ENCODE measurements at regions of chr6 and their contacts with region 1.

Region 1: DNA sequence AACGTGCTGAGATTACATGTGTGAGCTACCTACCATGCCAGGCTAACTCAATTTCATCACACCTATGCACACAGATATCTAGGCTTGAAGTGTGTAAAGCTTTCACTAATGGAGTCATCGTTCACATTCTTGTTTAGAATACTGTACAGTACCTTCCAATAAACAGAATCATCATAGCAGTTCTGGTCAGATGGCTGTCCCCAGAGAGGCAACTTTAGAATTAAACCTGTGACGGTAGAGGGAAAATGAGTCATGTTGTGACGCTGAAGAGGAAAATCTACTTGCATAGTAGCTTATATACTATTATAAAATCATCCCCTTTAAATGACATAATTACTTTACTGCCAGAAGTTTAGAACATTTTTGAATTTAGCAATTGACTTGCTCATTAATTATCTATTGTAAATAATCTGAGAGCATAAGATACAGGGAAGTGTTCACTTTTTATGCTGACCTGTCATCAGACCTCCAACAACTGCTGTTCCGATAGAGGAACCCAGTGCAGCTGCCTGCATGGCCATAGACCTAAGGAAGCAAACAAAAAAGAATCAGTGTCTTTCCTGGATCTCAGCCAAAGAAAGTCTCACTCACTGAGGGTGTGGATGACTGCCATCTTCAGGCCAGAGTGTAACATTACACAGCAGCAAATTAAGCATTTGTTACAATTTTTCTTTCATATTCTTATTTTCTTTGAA is 29.8 kb downstream of the RHAG start:
- DNase-seq: peak; percentile 27 to 68
- H3K4me3 ChIP-seq: no peak overlapping the region
- H3K27ac ChIP-seq: no peak overlapping the region
- H3K4me1 ChIP-seq: no peaks in the 10 kb centered on the region
- H3K27me3 ChIP-seq: no peaks in the 10 kb centered on the region
- CTCF ChIP-seq: peak; percentile 93

Region 2: GRCh38 chr6:49462927-49463611 is 143.8 kb before region 1 on chr6 and contains the starts of genes CENPQ and MMUT:
- CTCF ChIA-PET with region 1: no interaction called
- POLR2A ChIA-PET with region 1: no interaction called
- intact Hi-C with region 1: loop called (anchors 5 kb)
- DNase-seq: peak; percentile 87 to 88
- H3K4me3 ChIP-seq: peak within 1 kb of the TSS; percentile 89
- H3K27ac ChIP-seq: peak within 1 kb of the TSS; percentile 58
- H3K4me1 ChIP-seq: peaks cover 18% of the 10 kb centered on the region
- H3K27me3 ChIP-seq: no peaks in the 10 kb centered on the region
- CTCF ChIP-seq: no peak
- total RNA-seq, gene CENPQ: 9.5 and 11.0 TPM in 2 replicates
- total RNA-seq, gene MMUT: 14.4 and 17.5 TPM in 2 replicates

Region 3: DNA sequence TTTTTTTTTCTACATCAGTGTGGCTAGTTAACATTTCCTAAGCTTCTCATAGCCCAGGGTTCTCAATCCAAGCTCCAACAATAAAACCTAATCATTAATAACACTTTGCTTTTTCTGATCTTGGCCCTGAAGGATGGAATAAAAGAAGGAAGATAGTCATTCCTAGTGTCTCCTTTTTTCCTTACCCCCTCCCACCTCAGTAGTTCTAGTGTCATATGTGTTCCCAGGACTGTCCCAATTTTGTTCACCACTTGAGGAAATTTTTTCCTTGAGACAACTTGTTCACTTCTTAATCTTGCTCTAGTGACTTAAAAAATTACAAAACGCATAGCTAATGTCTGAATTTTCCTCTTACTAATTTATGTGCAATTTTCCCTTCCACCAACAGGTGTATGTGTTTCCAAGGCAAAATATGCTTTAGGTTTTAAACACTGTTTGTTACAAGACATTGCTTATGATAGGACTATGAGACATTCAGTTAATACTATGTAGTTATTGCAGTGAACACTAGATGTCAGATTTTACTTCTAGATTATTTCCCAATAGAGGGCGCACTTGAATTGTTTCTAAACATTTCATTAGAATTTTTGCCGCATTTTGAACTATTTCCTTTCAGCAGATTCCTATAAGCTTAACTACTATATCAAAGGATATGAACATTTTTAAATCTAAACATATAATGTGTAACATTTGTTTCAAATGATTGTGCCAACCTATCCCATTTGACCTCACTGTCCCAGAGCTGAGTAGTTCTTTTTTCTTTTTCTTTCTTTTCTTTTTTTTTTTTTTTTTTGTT is 74.9 kb before region 1 on chr6:
- CTCF ChIA-PET with region 1: interaction called, 16 read pairs
- POLR2A ChIA-PET with region 1: no interaction called
- intact Hi-C with region 1: loop called (anchors 1 kb)
- DNase-seq: peak in 1 of 2 experiments; percentile 79
- H3K4me3 ChIP-seq: peak overlapping the region; percentile 30; the same call in 1 of the 2 replicates
- H3K27ac ChIP-seq: no peak overlapping the region
- H3K4me1 ChIP-seq: 0 out of 2 replicates have a peak, but pooled peaks cover 5% of the 10 kb centered on the region
- H3K27me3 ChIP-seq: no peaks in the 10 kb centered on the region
- CTCF ChIP-seq: peak; percentile 84

Measured in PC-9 (cell line).